Aorta (tissue), 5 donors: ENCODE measurements at regions of chr3 and their contacts with region 1.

Region 1: GRCh38 chr3:9749645-9750555 is at the start of gene OGG1:
- DNase-seq: peak; percentile 99
- ATAC-seq: peak; percentile 98
- H3K4me3 ChIP-seq: peak within 1 kb of the TSS; percentile 24 to 32
- H3K27ac ChIP-seq: peak within 1 kb of the TSS; percentile 12 to 74
- H3K4me1 ChIP-seq: no peaks in the 10 kb centered on the region
- H3K27me3 ChIP-seq: no peaks in the 10 kb centered on the region
- total RNA-seq, gene OGG1: 25.8 to 32.6 TPM

Region 2: GRCh38 chr3:9731206-9732079 is 18.5 kb before region 1 on chr3 and contains the start of gene BRPF1:
- intact Hi-C with region 1: loop called in 1 of 2 experiments (anchors 1 kb)
- DNase-seq: peak; percentile 100
- ATAC-seq: peak; percentile 100
- H3K4me3 ChIP-seq: peak within 1 kb of the TSS; percentile 78 to 88
- H3K27ac ChIP-seq: peak within 1 kb of the TSS; percentile 30 to 96
- H3K4me1 ChIP-seq: no peaks in the 10 kb centered on the region
- H3K27me3 ChIP-seq: no peaks in the 10 kb centered on the region
- total RNA-seq, gene BRPF1: 16.6 to 17.6 TPM

Region 3: DNA sequence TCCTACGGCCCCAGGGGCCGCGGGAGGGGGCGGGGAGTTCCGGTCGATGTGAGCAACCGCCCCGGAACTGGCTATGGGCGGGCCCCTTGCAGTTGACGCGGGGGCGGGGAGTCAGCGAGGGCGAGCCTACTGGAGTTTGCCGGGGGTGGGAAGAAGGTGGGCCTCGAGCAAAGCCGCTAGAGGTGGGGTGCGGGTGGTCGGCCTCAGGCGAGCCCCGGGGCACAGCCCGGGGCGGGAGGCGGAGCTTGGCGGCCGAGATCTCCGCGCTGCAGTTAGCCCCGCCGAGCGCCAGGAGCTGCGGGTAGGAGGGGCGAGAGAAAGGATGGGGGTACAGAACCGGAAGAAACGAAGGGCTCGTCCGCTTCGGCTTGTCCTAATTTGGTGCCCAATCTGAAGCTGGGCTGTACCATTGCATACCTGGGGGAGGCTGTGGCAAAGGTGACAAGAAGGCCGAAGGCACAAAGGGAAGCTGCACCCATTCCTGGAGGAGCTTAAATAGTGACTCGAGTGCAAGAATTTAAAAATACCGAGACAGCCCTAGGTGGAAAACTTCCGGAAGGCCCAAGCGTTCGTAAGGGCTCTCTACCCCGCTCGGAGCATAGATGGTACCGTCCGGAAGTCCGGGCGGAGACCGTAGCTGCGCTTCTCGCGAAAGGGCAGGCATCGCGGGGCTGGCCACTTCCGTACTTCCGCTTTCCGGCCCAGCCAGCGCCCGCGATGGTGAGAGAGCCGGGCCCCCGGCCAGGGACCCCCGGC is 42.7 kb after region 1 on chr3 and contains the starts of genes ARPC4 and TADA3:
- intact Hi-C with region 1: loop called (anchors 5 kb)
- DNase-seq: peak; percentile 96 to 98
- ATAC-seq: peak; percentile 97
- H3K4me3 ChIP-seq: peak within 1 kb of the TSS; percentile 87
- H3K27ac ChIP-seq: peak within 1 kb of the TSS; percentile 74 to 79
- H3K4me1 ChIP-seq: no peaks in the 10 kb centered on the region
- H3K27me3 ChIP-seq: no peaks in the 10 kb centered on the region
- total RNA-seq, gene ARPC4: 126 to 165 TPM
- total RNA-seq, gene TADA3: 44.9 to 48.3 TPM